ENCODE measurements at regions of chr15 and their contacts with region 1.

Region 1: GRCh38 chr15:70810916-70811578 is 42.9 kb downstream of the LARP6 start:
- DNase-seq: no peak
- H3K4me3 Mint-ChIP-seq: no peak overlapping the region
- H3K27ac Mint-ChIP-seq: no peak overlapping the region
- H3K4me1 Mint-ChIP-seq: peaks cover 2% of the 10 kb centered on the region
- H3K27me3 Mint-ChIP-seq: peaks cover 12% of the 10 kb centered on the region

Region 2: GRCh38 chr15:70474471-70475396 is 336.3 kb before region 1 on chr15:
- CTCF ChIA-PET with region 1: no interaction called
- POLR2A ChIA-PET with region 1: no interaction called
- DNase-seq: peak; percentile 28
- H3K4me3 Mint-ChIP-seq: peak overlapping the region; percentile 21
- H3K27ac Mint-ChIP-seq: no peak overlapping the region
- H3K4me1 Mint-ChIP-seq: peaks cover 31% of the 10 kb centered on the region
- H3K27me3 Mint-ChIP-seq: peaks cover 78% of the 10 kb centered on the region

Region 3: DNA sequence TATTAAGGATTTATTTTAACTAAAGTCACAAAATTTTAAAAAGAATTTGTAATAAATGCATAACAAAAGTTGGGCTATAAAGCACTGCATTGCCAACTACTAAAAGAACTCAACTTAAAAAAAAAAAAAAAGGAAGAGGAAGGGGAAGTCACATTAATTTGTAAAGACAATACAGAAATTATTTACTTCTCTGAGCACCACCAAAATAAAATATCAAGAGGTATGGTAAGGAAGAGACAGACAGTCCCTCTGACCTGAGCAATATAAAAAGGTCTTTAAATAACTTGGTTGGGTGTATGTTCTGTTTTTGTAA is 131.2 kb before region 1 on chr15:
- CTCF ChIA-PET with region 1: interaction called, 19 read pairs
- POLR2A ChIA-PET with region 1: no interaction called
- DNase-seq: no peak
- H3K4me3 Mint-ChIP-seq: no peak overlapping the region
- H3K27ac Mint-ChIP-seq: no peak overlapping the region
- H3K4me1 Mint-ChIP-seq: peaks cover 2% of the 10 kb centered on the region
- H3K27me3 Mint-ChIP-seq: peaks cover 33% of the 10 kb centered on the region

Region 4: GRCh38 chr15:70826634-70827033 is 15.6 kb after region 1 on chr15:
- CTCF ChIA-PET with region 1: interaction called, 14 read pairs
- POLR2A ChIA-PET with region 1: no interaction called
- DNase-seq: no peak
- H3K4me3 Mint-ChIP-seq: no peak overlapping the region
- H3K27ac Mint-ChIP-seq: no peak overlapping the region
- H3K4me1 Mint-ChIP-seq: no peaks in the 10 kb centered on the region
- H3K27me3 Mint-ChIP-seq: peaks cover 8% of the 10 kb centered on the region

Region 5: DNA sequence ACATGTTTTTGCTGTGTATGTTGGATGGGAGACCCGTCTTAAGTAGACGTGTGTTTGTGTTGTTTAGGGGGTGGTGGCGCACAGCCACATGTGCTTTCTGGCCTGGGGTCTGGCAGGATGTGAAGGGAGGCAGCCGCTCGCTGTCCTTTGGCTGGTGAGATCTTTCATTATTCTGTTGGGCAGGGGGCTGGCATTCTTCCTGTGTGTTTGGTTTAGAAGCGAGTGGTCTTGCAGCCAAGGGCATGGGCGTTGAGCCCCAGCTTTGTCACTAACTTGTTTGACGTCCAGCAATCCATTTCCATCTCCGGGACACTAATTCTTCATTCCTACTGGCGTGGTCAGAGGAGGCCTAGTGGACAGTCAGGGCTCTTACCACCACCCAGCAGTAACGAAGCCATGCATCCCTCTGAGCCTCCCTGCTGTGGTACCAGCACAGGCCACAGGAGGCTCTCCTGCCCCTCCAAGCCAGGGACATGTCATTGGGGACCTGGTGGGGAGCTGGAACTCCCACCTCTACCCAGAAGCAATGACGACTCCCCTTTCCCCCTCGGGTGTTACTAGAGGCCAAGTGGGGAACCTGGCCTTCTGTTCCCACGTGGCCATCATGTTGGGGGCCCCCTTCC is 314.9 kb after region 1 on chr15:
- CTCF ChIA-PET with region 1: no interaction called
- POLR2A ChIA-PET with region 1: no interaction called
- DNase-seq: no peak
- H3K4me3 Mint-ChIP-seq: no peak overlapping the region
- H3K27ac Mint-ChIP-seq: no peak overlapping the region
- H3K4me1 Mint-ChIP-seq: no peaks in the 10 kb centered on the region
- H3K27me3 Mint-ChIP-seq: no peaks in the 10 kb centered on the region